Activated naive CD4-positive, alpha-beta T cell treated with anti-CD3 and anti-CD28 coated beads for 36 hours (primary cell): ENCODE measurements at regions of chr6 and their contacts with region 1.

Region 1: DNA sequence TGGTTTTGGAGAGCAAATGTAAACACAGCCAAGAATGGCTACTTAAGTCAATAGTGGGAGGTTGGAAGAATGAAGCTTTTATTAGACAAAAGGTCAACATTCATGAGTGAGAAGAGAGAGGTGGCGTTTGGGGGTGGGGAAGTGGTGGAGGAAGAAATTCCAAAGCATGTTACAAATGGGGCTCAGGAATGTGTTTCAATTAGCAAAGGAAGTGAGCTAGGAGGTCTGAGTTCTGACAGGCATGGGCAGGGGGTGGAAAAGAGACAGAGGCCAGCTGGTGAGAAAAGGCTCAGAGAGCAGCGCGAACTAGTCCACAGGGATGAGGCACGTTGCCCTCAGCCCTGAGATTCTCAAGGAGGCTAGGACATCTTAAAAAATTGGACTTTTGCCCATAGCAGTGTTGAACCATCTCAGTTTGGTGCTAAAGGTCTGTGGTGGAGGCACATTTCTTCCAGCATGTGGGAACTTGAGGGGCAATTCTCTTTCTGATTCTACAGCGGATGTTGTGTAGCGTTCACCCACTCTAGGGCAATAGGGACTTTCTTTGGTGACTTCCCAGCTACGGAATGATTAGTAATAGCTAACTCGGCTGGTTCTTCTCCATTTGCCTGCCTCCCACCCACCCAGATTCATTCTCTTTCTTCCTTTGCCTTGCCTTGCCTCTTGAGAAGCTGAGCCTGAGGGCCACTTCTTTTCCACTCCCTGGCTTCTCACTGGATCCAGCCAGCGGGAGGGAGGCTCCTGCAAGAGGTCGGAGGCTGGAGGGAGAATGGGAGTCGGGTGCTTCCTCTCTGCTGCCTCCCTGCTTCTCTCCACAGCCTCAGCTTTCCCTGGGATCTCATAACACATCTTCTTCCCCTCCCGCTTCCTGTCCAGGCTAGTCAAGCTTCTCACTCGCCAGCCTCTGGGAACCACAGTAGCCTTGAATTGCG is 45.1 kb upstream of the NEDD9 start:
- DNase-seq: peak; percentile 48
- H3K4me3 Mint-ChIP-seq: peak overlapping the region; percentile 3
- H3K27ac Mint-ChIP-seq: peak overlapping the region; percentile 74
- H3K4me1 Mint-ChIP-seq: peaks cover 42% of the 10 kb centered on the region
- H3K27me3 Mint-ChIP-seq: no peaks in the 10 kb centered on the region

Region 2: GRCh38 chr6:11263291-11263775 is 14.2 kb before region 1 on chr6:
- CTCF ChIA-PET with region 1: no interaction called
- intact Hi-C with region 1: loop called (anchors 2 kb)
- DNase-seq: no peak
- H3K4me3 Mint-ChIP-seq: no peak overlapping the region
- H3K27ac Mint-ChIP-seq: no peak overlapping the region
- H3K4me1 Mint-ChIP-seq: peaks cover 31% of the 10 kb centered on the region
- H3K27me3 Mint-ChIP-seq: no peaks in the 10 kb centered on the region

Region 3: GRCh38 chr6:11330413-11330760 is 52.8 kb after region 1 on chr6:
- CTCF ChIA-PET with region 1: no interaction called
- intact Hi-C with region 1: loop called (anchors 5 kb)
- DNase-seq: no peak
- H3K4me3 Mint-ChIP-seq: no peak overlapping the region
- H3K27ac Mint-ChIP-seq: peak overlapping the region; percentile 68
- H3K4me1 Mint-ChIP-seq: peaks cover 58% of the 10 kb centered on the region
- H3K27me3 Mint-ChIP-seq: no peaks in the 10 kb centered on the region

Region 4: GRCh38 chr6:11414176-11414963 is 136.8 kb after region 1 on chr6:
- CTCF ChIA-PET with region 1: no interaction called
- intact Hi-C with region 1: loop called (anchors 2 kb)
- DNase-seq: peak; percentile 60
- H3K4me3 Mint-ChIP-seq: no peak overlapping the region
- H3K27ac Mint-ChIP-seq: no peak overlapping the region
- H3K4me1 Mint-ChIP-seq: peaks cover 33% of the 10 kb centered on the region
- H3K27me3 Mint-ChIP-seq: no peaks in the 10 kb centered on the region

Region 5: DNA sequence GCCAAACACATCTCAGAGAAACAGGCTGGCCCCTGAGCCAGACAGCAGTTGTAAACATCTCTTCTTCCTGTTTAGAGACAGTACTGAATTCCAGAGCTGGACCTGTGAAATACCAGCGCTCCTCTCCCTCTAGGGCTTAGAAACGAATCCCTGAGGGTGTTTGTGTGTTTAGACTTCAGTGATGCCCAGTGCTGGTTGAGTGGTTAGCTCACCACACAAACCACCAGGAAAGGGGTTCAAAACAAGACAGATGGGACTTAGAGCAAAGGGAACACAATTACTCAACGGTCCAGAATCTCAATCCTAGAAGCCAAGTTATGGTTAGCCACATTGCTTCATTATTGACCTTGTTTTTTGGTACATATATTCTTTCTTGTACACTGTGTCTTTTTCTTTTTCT is 151.4 kb after region 1 on chr6:
- CTCF ChIA-PET with region 1: no interaction called
- intact Hi-C with region 1: no loop called
- DNase-seq: no peak
- H3K4me3 Mint-ChIP-seq: no peak overlapping the region
- H3K27ac Mint-ChIP-seq: no peak overlapping the region
- H3K4me1 Mint-ChIP-seq: peaks cover 35% of the 10 kb centered on the region
- H3K27me3 Mint-ChIP-seq: no peaks in the 10 kb centered on the region